Cardiac septum (tissue), 1 donor: ENCODE measurements at regions of chr3 and their contacts with region 1.

Region 1: DNA sequence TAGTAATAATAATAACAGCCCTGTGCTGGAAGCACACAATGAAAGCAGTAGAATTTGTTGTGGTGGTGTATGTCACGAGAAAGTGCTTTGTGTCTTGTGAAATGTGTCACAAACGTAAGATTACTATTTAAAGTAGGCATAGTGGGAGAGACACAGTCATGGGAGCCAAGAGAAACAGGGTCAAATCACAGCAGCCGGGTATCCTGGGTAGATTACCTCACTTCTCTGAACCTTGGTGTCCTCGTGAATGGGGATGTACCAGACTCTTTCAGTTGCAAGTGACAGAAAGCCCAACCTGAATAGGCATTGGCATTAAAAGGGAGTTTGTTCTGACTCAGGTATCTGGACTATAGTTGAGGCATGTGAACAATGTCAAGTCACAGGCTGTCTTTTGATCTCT is 29.1 kb upstream of the SRGAP3 start:
- DNase-seq: no peak

Region 2: GRCh38 chr3:9249273-9250192 is 29.0 kb before region 1 on chr3 and contains the start of gene SRGAP3:
- intact Hi-C with region 1: loop called (anchors 1 kb)
- DNase-seq: peak; percentile 88
- total RNA-seq, gene SRGAP3: 10.1 TPM

Region 3: DNA sequence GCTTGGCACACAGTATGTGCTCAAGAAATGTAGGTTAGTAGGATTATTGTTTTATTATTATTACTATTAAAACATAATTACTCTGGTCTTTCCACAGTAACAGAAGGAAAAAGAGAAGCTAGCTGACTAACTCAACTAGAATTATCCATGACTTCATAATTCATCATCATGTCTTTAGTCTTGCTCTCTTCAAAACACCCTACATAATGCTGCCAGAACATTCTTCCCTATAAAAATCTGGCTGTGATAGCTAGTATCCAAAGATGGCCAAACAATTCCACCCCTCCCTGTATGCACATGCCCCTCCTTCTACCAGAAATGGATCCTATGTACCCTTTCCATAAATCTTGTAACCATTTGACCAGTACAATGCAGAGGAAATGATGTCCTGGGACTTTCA is 19.7 kb after region 1 on chr3:
- intact Hi-C with region 1: no loop called
- DNase-seq: no peak